GM12878 (cell line): ENCODE measurements at regions of chr6 and their contacts with region 1.

Region 1: DNA sequence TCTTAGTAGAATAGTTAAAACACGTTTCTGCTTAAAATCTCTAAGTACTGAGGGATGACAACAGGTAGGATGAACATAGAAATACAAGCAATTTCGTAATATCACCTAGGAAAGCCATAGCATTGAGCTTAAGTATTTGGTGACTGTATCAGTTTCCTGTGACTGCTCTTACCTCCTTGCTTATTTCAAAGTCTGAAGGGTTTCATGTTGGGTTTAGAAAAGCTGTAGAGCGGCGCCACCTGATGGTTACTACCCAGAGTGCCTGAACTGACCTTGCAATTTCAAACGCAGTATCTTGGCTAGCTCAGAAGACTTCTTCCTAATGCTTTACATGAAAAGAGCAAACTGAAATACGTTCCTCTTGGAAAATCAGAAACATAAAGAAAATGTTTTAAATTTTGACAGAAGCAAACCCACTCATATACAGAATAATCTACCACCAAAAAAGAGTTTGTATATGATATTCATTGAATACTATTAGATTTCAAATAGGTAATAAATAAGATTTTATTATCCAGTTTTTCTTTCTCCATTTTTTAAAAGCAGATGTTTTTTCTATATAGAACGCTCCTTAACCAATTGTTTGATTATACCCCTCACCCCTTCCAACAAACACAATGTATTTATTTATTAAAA is 82.3 kb upstream of the RIPOR2 start:
- DNase-seq: no peak
- ATAC-seq: peak; percentile 89
- H3K4me3 ChIP-seq: no peak overlapping the region
- H3K27ac ChIP-seq: no peak overlapping the region
- H3K4me1 ChIP-seq: peaks cover 5% of the 10 kb centered on the region
- H3K27me3 ChIP-seq: no peaks in the 10 kb centered on the region
- CTCF ChIP-seq: peak; percentile 76 to 90 (median 82)
- EP300 ChIP-seq: no peak
- POLR2A ChIP-seq: no peak
- RAD21 ChIP-seq: peak; percentile 99

Region 2: GRCh38 chr6:24774696-24775519 is 243.1 kb before region 1 on chr6 and contains the start of gene GMNN:
- CTCF ChIA-PET with region 1: interaction called, 9 read pairs
- POLR2A ChIA-PET with region 1: interaction called, 6 read pairs
- RAD21 ChIA-PET with region 1: interaction called, 6 read pairs
- SMC1A ChIA-PET with region 1: interaction called, 12 read pairs
- in situ Hi-C with region 1: no loop called
- intact Hi-C with region 1: loop called (anchors 5 kb)
- DNase-seq: peak; percentile 78
- ATAC-seq: peak; percentile 94
- H3K4me3 ChIP-seq: peak within 1 kb of the TSS; percentile 79
- H3K27ac ChIP-seq: peak within 1 kb of the TSS; percentile 87
- H3K4me1 ChIP-seq: peaks cover 3% of the 10 kb centered on the region; the same call in 1 of the 2 replicates
- H3K27me3 ChIP-seq: no peaks in the 10 kb centered on the region
- CTCF ChIP-seq: no peak
- EP300 ChIP-seq: no peak
- POLR2A ChIP-seq: peak; percentile 96
- RAD21 ChIP-seq: no peak
- polyA plus RNA-seq, gene GMNN: 146 to 153 TPM

Region 3: GRCh38 chr6:24855395-24856245 is 162.4 kb before region 1 on chr6:
- CTCF ChIA-PET with region 1: interaction called, 314 read pairs
- POLR2A ChIA-PET with region 1: interaction called, 5 read pairs
- RAD21 ChIA-PET with region 1: interaction called, 92 read pairs
- SMC1A ChIA-PET with region 1: interaction called, 143 read pairs
- in situ Hi-C with region 1: loop called (anchors 5 kb)
- intact Hi-C with region 1: loop called (anchors 1 kb)
- DNase-seq: peak; percentile 58
- ATAC-seq: peak; percentile 85
- H3K4me3 ChIP-seq: no peak overlapping the region
- H3K27ac ChIP-seq: no peak overlapping the region
- H3K4me1 ChIP-seq: peaks cover 32% of the 10 kb centered on the region
- H3K27me3 ChIP-seq: no peaks in the 10 kb centered on the region
- CTCF ChIP-seq: peak; percentile 78 to 90 (median 87)
- EP300 ChIP-seq: no peak
- POLR2A ChIP-seq: no peak
- RAD21 ChIP-seq: peak; percentile 98

Region 4: DNA sequence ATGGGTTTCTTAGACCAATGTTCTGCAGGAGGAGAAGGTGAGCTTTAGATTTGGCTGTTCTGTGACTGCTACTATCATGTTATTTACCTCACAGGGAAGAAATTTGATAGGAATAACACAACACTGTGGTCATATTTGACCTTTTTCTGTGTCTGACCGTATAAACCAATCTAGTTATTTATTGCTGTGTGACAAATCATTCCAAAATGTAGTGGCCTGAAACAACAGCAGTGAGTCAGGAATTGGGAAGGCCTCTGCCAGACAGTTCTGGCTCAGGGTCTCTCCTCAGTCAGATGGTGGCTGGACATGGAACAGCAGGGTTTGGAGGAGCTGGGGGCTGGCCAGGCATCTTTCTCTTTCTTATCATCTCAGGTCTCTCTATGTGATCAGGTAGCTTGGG is 115.3 kb before region 1 on chr6:
- CTCF ChIA-PET with region 1: interaction called, 39 read pairs
- POLR2A ChIA-PET with region 1: no interaction called
- RAD21 ChIA-PET with region 1: interaction called, 4 read pairs
- SMC1A ChIA-PET with region 1: interaction called, 4 read pairs
- in situ Hi-C with region 1: no loop called
- intact Hi-C with region 1: no loop called
- DNase-seq: no peak
- ATAC-seq: no peak
- H3K4me3 ChIP-seq: no peak overlapping the region
- H3K27ac ChIP-seq: no peak overlapping the region
- H3K4me1 ChIP-seq: no peaks in the 10 kb centered on the region
- H3K27me3 ChIP-seq: no peaks in the 10 kb centered on the region
- CTCF ChIP-seq: no peak
- EP300 ChIP-seq: no peak
- POLR2A ChIP-seq: no peak
- RAD21 ChIP-seq: no peak

Region 5: GRCh38 chr6:25006565-25007001 is 11.5 kb before region 1 on chr6:
- CTCF ChIA-PET with region 1: interaction called, 20 read pairs
- POLR2A ChIA-PET with region 1: no interaction called
- RAD21 ChIA-PET with region 1: interaction called, 14 read pairs
- SMC1A ChIA-PET with region 1: interaction called, 17 read pairs
- in situ Hi-C with region 1: no loop called
- intact Hi-C with region 1: no loop called
- DNase-seq: no peak
- ATAC-seq: peak; percentile 72
- H3K4me3 ChIP-seq: 0 out of 2 replicates have a peak overlapping the region, but pooled peaks have one; percentile 28
- H3K27ac ChIP-seq: peak overlapping the region; percentile 46; the same call in 1 of the 2 replicates
- H3K4me1 ChIP-seq: peaks cover 14% of the 10 kb centered on the region
- H3K27me3 ChIP-seq: no peaks in the 10 kb centered on the region
- CTCF ChIP-seq: no peak
- EP300 ChIP-seq: peak in 1 of 2 experiments; percentile 44; a peak in 1 of 4 replicates
- POLR2A ChIP-seq: no peak
- RAD21 ChIP-seq: no peak

Region 6: DNA sequence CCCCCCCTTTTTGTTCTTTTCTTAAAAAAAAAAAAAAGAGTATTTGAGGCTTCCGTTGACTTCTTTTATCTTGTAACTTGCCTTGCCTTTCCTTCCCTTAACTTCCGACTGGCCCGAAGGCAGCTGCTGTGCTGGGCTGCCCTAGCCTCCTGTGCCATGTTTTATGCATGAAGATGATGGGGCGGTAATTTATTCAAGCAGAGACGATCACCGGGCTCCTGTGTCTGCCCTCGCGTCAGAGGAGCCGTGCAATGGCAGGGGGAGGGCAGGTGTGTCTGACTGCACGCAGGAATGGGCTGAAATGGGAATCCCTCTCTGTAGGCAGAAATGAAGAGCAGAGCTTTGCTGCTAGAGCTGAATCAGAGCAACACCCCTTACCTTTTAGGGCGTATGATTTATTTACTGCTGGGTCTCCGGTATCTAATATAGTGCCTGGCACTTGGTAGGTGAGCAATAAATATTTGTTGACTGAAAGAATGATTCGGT is 24.0 kb after region 1 on chr6:
- CTCF ChIA-PET with region 1: interaction called, 16 read pairs
- POLR2A ChIA-PET with region 1: interaction called, 4 read pairs
- RAD21 ChIA-PET with region 1: interaction called, 10 read pairs
- SMC1A ChIA-PET with region 1: interaction called, 8 read pairs
- in situ Hi-C with region 1: no loop called
- intact Hi-C with region 1: no loop called
- DNase-seq: no peak
- ATAC-seq: peak; percentile 62
- H3K4me3 ChIP-seq: peak overlapping the region; percentile 67
- H3K27ac ChIP-seq: peak overlapping the region; percentile 60
- H3K4me1 ChIP-seq: peaks cover 23% of the 10 kb centered on the region
- H3K27me3 ChIP-seq: no peaks in the 10 kb centered on the region
- CTCF ChIP-seq: no peak
- EP300 ChIP-seq: no peak
- POLR2A ChIP-seq: peak; percentile 50; the same call in 1 of the 2 replicates
- RAD21 ChIP-seq: no peak

Region 7: GRCh38 chr6:25070547-25071366 is 52.7 kb after region 1 on chr6:
- CTCF ChIA-PET with region 1: interaction called, 36 read pairs
- POLR2A ChIA-PET with region 1: no interaction called
- RAD21 ChIA-PET with region 1: interaction called, 40 read pairs
- SMC1A ChIA-PET with region 1: interaction called, 35 read pairs
- in situ Hi-C with region 1: no loop called
- intact Hi-C with region 1: loop called (anchors 1 kb)
- DNase-seq: peak; percentile 65
- ATAC-seq: peak; percentile 96
- H3K4me3 ChIP-seq: peak overlapping the region; percentile 70
- H3K27ac ChIP-seq: no peak overlapping the region
- H3K4me1 ChIP-seq: no peaks in the 10 kb centered on the region
- H3K27me3 ChIP-seq: no peaks in the 10 kb centered on the region
- CTCF ChIP-seq: peak; percentile 85 to 90 (median 88)
- EP300 ChIP-seq: no peak
- POLR2A ChIP-seq: no peak
- RAD21 ChIP-seq: peak; percentile 97